PC-3 (cell line): ENCODE measurements at regions of chr11 and their contacts with region 1.

Region 1: GRCh38 chr11:60913793-60914632 is at the start of gene TMEM109:
- DNase-seq: peak; percentile 89
- ATAC-seq: peak; percentile 71
- H3K4me3 ChIP-seq: peak within 1 kb of the TSS; percentile 73
- H3K27ac ChIP-seq: peak within 1 kb of the TSS; percentile 73
- H3K4me1 ChIP-seq: peaks cover 33% of the 10 kb centered on the region
- H3K27me3 ChIP-seq: no peaks in the 10 kb centered on the region
- CTCF ChIP-seq: no peak
- total RNA-seq, gene TMEM109: 165 and 202 TPM in 2 replicates

Region 2: DNA sequence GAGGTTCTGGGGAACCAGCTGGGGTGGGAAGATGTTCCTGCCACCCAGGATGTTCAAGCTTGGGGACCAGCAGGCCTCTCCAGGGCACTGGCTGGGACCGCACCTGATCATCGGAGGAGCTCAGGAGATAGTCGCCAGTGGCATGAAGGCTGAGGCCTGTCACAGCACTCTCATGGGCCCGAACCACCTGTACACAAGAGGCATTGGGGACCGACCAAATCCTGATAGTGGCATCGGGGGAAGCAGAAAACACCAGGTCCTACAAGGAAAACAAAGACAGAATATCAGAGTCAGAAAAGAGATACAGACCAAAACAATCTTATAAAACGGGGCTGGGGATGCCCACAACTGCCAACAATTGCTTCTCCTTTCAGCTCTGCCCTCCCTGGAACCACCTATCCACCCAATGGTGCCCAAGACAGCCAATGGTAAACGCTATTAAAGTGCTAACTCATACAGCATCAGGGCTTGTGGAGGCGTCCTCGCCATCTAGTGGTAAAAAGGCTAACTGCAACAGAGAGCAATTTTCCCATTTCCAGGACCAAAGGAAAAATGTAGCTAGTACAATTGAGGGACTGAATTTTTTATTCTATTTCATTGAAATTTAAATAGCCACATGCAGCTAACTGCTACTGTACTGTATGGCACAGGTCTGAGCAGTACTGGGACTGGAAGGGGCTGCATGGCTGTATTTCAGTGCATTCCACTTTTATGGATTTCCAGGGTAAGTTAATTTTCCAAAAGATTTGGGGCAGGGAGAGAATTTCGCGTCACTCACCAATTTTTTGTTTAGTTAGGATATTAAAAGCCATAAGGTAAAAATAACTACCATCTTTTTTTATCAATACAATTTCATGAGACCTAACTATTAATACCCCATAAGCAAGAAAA is 14.7 kb before region 1 on chr11:
- CTCF ChIA-PET with region 1: interaction called, 13 read pairs
- POLR2A ChIA-PET with region 1: no interaction called
- intact Hi-C with region 1: no loop called
- DNase-seq: peak; percentile 89
- ATAC-seq: peak; percentile 96
- H3K4me3 ChIP-seq: no peak overlapping the region
- H3K27ac ChIP-seq: no peak overlapping the region
- H3K4me1 ChIP-seq: peaks cover 5% of the 10 kb centered on the region
- H3K27me3 ChIP-seq: no peaks in the 10 kb centered on the region
- CTCF ChIP-seq: peak; percentile 97

Region 3: GRCh38 chr11:60924110-60924905 is 10.3 kb after region 1 on chr11 and contains the start of gene TMEM132A:
- CTCF ChIA-PET with region 1: no interaction called
- POLR2A ChIA-PET with region 1: no interaction called
- intact Hi-C with region 1: loop called (anchors 1 kb)
- DNase-seq: peak; percentile 82
- ATAC-seq: peak; percentile 83
- H3K4me3 ChIP-seq: peak within 1 kb of the TSS; percentile 85
- H3K27ac ChIP-seq: peak within 1 kb of the TSS; percentile 56
- H3K4me1 ChIP-seq: peaks cover 26% of the 10 kb centered on the region
- H3K27me3 ChIP-seq: no peaks in the 10 kb centered on the region
- CTCF ChIP-seq: no peak
- total RNA-seq, gene TMEM132A: 84.2 and 88.1 TPM in 2 replicates

Region 4: DNA sequence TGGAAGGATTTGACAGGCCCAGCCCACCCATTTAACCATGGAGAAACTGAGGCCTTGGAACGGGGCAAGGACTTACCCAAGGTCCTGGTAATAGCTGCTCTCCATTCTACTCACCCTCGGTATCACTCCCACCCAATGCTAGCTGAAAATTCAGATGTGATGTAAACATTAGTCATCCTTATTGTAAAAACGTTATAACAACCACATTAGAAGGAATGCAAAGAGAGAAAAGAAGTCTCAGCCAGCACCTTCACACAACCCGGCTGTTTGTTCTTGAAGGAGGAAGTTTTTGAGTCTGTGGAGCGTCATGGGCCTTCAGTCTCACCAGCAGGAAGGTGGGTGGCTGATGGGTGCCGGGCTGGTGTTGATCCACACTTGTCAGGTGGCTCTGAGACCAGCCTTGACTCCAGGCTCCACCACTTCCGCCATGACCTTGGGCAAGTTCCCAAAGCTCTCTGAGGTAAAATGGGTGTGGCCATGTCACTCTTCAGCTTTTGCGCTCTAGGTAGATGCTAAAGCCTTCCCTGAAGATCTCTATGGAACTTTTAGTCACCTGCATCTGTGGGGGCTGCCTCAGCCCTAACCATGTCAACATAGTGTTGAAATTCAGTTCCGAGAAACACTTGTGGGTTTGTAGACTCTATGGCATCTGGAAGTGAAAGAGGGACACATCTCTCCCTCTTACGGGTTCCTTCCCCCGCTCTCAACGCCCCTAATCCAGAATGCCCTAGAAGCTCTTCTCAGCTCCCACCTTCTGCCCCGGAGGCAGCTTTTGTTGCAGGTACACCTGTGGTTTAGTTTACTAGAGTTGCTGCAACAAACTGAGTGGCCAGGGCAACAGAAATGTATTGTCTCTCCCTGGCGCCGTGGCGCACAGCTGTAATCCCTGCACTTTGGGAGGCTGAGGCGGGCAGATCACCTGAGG is 72.2 kb after region 1 on chr11:
- CTCF ChIA-PET with region 1: no interaction called
- POLR2A ChIA-PET with region 1: no interaction called
- intact Hi-C with region 1: loop called (anchors 1 kb)
- DNase-seq: peak; percentile 87
- ATAC-seq: peak; percentile 94
- H3K4me3 ChIP-seq: no peak overlapping the region
- H3K27ac ChIP-seq: peak overlapping the region; percentile 11
- H3K4me1 ChIP-seq: peaks cover 16% of the 10 kb centered on the region
- H3K27me3 ChIP-seq: peaks cover 17% of the 10 kb centered on the region; the same call in 1 of the 2 replicates
- CTCF ChIP-seq: no peak

Region 5: DNA sequence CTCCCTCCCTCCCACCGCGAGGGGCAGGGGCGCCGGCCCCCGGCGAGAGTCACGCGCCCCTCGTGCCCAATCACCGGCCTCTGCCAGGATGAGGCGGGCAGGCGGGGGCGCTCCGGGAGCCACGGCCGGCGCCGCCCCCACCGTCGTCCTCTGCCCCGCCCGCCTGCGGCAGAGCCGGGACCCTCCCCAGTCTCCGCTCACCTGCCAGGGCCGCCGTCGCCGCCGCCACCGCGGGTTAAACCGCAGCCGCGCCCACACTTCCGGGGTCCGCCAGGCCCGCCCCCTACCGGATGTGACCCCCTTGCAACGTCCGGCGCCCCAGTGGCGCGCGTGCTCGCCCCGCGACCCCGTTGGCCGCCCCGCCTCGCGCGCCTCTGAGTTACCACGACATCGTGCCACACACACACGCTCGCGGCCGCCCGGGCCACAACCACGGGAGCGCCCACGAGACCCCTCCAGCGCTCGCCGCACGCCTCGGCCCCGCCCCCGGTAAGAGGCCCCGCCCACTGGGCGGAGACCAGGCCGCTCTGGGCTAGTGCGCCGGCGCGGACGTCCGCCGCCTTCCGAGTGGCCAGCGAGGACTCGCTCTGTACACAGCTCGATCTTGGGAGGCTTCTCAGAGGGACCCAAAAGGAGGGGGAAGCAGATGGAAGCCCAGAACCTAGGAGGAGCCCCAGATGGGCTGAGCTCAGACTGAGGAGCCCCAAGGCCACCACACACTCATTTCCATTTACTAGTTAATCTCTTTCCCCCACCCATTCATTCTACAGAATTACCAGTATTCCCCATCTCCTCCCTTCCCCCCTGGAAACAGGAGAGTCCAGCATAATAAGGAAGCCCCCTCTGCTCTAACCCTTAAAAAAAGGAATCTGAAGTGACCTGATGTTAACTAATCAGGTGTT is 247.4 kb after region 1 on chr11 and contains the start of gene VPS37C:
- CTCF ChIA-PET with region 1: no interaction called
- POLR2A ChIA-PET with region 1: no interaction called
- intact Hi-C with region 1: loop called (anchors 2 kb)
- DNase-seq: peak; percentile 94
- ATAC-seq: peak; percentile 81
- H3K4me3 ChIP-seq: peak within 1 kb of the TSS; percentile 78
- H3K27ac ChIP-seq: peak within 1 kb of the TSS; percentile 82
- H3K4me1 ChIP-seq: peaks cover 41% of the 10 kb centered on the region
- H3K27me3 ChIP-seq: no peaks in the 10 kb centered on the region
- CTCF ChIP-seq: no peak
- total RNA-seq, gene VPS37C: 28.9 and 34.9 TPM in 2 replicates

Region 6: DNA sequence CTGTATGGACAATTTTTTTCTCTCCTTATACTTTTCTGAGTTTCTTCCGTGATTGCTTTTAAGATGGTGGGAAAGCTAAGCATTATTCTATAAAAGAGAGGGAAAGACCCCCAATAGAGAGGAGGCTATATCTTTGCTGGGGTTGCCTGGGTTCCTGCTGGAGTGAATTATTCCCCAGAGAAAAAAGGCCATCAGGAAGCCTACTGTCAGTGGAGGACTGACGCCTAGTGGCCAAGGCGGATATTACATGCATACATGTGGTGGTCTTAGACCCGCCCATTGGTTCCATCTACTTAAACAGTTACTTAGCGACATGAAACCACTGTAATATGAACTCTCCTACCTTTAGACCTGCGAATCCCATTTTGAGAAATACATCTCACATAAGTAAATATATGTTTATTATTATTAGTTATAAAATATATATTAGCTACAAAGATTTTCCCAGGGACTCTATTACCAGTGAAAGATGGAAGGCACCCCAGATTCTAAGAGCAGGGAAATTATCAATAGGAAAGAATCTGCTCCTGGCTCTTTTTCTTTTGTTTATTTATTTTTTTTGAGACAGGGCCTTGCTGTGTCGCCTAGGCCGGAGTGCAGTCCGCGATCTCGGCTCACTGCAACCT is 273.6 kb after region 1 on chr11:
- CTCF ChIA-PET with region 1: no interaction called
- POLR2A ChIA-PET with region 1: no interaction called
- intact Hi-C with region 1: loop called (anchors 5 kb)
- DNase-seq: peak; percentile 91
- ATAC-seq: peak; percentile 87
- H3K4me3 ChIP-seq: no peak overlapping the region
- H3K27ac ChIP-seq: no peak overlapping the region
- H3K4me1 ChIP-seq: no peaks in the 10 kb centered on the region
- H3K27me3 ChIP-seq: no peaks in the 10 kb centered on the region
- CTCF ChIP-seq: peak; percentile 94